IMR-90 (cell line): ENCODE measurements at regions of chr20 and their contacts with region 1.

Region 1: GRCh38 chr20:38084400-38084951 is 50.9 kb downstream of the RPRD1B start:
- DNase-seq: peak; percentile 82
- ATAC-seq: peak; percentile 93
- H3K4me3 ChIP-seq: no peak overlapping the region
- H3K27ac ChIP-seq: peak overlapping the region; percentile 93
- H3K4me1 ChIP-seq: peaks cover 35% of the 10 kb centered on the region
- H3K27me3 ChIP-seq: no peaks in the 10 kb centered on the region
- CTCF ChIP-seq: no peak
- POLR2A ChIP-seq: no peak
- RAD21 ChIP-seq: no peak

Region 2: GRCh38 chr20:37745553-37745952 is 338.9 kb before region 1 on chr20:
- CTCF ChIA-PET with region 1: interaction called, 10 read pairs
- POLR2A ChIA-PET with region 1: no interaction called
- dilution Hi-C with region 1: no loop called
- in situ Hi-C with region 1: no loop called
- intact Hi-C with region 1: no loop called
- DNase-seq: no peak
- ATAC-seq: no peak
- H3K4me3 ChIP-seq: no peak overlapping the region
- H3K27ac ChIP-seq: no peak overlapping the region
- H3K4me1 ChIP-seq: no peaks in the 10 kb centered on the region; the same call in 1 of the 2 replicates
- H3K27me3 ChIP-seq: no peaks in the 10 kb centered on the region
- CTCF ChIP-seq: no peak
- POLR2A ChIP-seq: no peak
- RAD21 ChIP-seq: no peak

Region 3: DNA sequence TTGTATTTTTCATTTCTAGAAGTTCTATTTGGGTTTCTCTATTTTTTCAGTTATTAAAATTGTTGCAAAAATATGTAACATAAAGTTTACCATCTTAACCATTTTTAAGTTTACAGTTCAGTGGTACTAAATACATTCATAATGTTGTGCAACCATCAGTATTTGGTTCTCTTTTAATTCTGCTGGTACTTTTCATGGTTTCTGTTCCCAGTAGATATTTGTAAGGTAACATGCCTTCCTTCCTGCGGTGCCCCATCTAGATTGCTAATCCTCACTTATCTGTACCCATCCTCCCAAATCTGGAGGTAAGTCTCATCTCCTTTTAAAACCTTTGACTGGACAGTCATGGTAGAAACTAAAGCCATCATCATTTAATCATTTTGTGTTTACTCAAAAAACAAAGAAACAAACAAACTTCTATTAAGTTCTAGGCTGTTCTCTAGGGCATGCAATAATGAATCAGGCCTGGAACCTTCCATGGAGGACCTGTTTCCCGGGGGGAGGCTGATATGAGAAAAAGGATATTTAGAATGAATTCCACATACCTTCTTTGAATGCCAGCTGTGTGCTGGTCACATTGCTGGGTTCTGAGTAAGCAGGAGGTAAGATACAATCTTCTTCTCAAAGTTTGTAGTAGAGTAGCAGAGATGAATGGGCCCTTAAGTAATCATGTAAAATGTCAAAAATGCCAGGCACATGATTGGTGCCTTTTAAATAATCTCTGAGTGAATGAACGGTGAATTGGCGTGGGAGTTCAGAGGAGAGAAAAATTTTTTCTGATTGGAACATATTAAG is 33.0 kb after region 1 on chr20:
- CTCF ChIA-PET with region 1: no interaction called
- POLR2A ChIA-PET with region 1: no interaction called
- dilution Hi-C with region 1: no loop called
- in situ Hi-C with region 1: no loop called
- intact Hi-C with region 1: loop called (anchors 5 kb)
- DNase-seq: peak; percentile 66
- ATAC-seq: peak; percentile 69
- H3K4me3 ChIP-seq: no peak overlapping the region
- H3K27ac ChIP-seq: no peak overlapping the region
- H3K4me1 ChIP-seq: peaks cover 7% of the 10 kb centered on the region
- H3K27me3 ChIP-seq: no peaks in the 10 kb centered on the region
- CTCF ChIP-seq: no peak
- POLR2A ChIP-seq: no peak
- RAD21 ChIP-seq: no peak

Region 4: GRCh38 chr20:38883081-38883980 is 798.9 kb after region 1 on chr20:
- CTCF ChIA-PET with region 1: no interaction called
- POLR2A ChIA-PET with region 1: no interaction called
- dilution Hi-C with region 1: no loop called
- in situ Hi-C with region 1: no loop called
- intact Hi-C with region 1: no loop called
- DNase-seq: peak; percentile 2
- ATAC-seq: no peak
- H3K4me3 ChIP-seq: no peak overlapping the region
- H3K27ac ChIP-seq: no peak overlapping the region
- H3K4me1 ChIP-seq: no peaks in the 10 kb centered on the region
- H3K27me3 ChIP-seq: peaks cover 12% of the 10 kb centered on the region
- CTCF ChIP-seq: no peak
- POLR2A ChIP-seq: no peak
- RAD21 ChIP-seq: no peak